B cell (primary cell): ENCODE measurements at regions of chr22 and their contacts with region 1.

Region 1: GRCh38 chr22:23786752-23787599 is at the start of gene SMARCB1:
- DNase-seq: peak; percentile 94
- ATAC-seq: peak; percentile 85
- H3K4me3 ChIP-seq: peak within 1 kb of the TSS; percentile 72 to 95 (median 84)
- H3K4me3 Mint-ChIP-seq: peak within 1 kb of the TSS; percentile 95
- H3K27ac ChIP-seq: peak within 1 kb of the TSS; percentile 94 to 98
- H3K27ac Mint-ChIP-seq: peak within 1 kb of the TSS; percentile 91
- H3K4me1 ChIP-seq: peaks cover 48 to 58% of the 10 kb centered on the region in 2 donors
- H3K4me1 Mint-ChIP-seq: peaks cover 39% of the 10 kb centered on the region
- H3K27me3 ChIP-seq: no peaks in the 10 kb centered on the region
- H3K27me3 Mint-ChIP-seq: no peaks in the 10 kb centered on the region
- CTCF ChIP-seq: no peak
- total RNA-seq, gene SMARCB1: 179 and 187 TPM in 2 replicates

Region 2: DNA sequence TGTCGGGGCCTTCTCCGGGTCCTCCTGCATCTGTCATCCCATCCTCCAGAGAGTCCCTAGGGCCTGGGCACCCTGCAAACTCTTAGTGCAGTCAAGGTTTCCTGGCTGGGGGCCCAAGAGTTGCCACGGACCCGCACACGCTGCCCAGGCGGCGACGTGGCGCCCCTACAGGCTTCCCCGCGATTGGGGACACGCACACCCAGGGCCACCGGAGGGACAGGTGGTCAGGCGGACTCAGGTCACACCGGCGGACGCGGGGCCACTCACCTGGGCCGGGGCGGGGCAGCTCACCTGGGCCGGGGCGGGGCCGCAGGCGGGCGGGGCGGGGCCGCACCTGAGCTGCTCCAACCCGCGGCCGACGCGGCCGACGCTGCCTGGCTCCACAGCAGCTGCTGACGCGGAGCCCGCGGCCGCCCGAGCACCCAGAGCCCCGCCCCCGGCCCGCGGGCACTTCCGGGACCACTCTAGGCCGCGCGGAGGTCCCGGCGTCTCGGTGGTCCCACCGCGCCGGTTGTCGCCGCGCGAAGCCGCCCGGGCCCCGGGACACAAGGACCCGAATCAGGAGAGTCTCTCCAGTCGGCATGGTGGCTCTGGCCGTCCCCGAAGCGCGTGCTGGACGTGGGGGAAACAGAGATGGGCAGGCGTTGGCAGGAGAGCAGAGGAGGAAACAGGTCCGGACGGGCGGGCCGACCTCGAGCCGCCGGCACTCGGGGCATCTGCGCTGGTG is 36.1 kb before region 1 on chr22 and contains the start of gene ZNF70:
- CTCF ChIA-PET with region 1: no interaction called
- POLR2A ChIA-PET with region 1: interaction called, 29 read pairs
- intact Hi-C with region 1: loop called (anchors 1 kb)
- DNase-seq: peak; percentile 92
- ATAC-seq: peak; percentile 56
- H3K4me3 ChIP-seq: peak within 1 kb of the TSS; percentile 6 to 88 (median 83)
- H3K4me3 Mint-ChIP-seq: peak within 1 kb of the TSS; percentile 93
- H3K27ac ChIP-seq: peak within 1 kb of the TSS; percentile 85 to 98
- H3K27ac Mint-ChIP-seq: peak within 1 kb of the TSS; percentile 99
- H3K4me1 ChIP-seq: peaks cover 24 to 53% of the 10 kb centered on the region in 2 donors
- H3K4me1 Mint-ChIP-seq: peaks cover 55% of the 10 kb centered on the region
- H3K27me3 ChIP-seq: no peaks in the 10 kb centered on the region
- H3K27me3 Mint-ChIP-seq: no peaks in the 10 kb centered on the region
- CTCF ChIP-seq: no peak
- total RNA-seq, gene ZNF70: 8.3 and 9.6 TPM in 2 replicates

Region 3: DNA sequence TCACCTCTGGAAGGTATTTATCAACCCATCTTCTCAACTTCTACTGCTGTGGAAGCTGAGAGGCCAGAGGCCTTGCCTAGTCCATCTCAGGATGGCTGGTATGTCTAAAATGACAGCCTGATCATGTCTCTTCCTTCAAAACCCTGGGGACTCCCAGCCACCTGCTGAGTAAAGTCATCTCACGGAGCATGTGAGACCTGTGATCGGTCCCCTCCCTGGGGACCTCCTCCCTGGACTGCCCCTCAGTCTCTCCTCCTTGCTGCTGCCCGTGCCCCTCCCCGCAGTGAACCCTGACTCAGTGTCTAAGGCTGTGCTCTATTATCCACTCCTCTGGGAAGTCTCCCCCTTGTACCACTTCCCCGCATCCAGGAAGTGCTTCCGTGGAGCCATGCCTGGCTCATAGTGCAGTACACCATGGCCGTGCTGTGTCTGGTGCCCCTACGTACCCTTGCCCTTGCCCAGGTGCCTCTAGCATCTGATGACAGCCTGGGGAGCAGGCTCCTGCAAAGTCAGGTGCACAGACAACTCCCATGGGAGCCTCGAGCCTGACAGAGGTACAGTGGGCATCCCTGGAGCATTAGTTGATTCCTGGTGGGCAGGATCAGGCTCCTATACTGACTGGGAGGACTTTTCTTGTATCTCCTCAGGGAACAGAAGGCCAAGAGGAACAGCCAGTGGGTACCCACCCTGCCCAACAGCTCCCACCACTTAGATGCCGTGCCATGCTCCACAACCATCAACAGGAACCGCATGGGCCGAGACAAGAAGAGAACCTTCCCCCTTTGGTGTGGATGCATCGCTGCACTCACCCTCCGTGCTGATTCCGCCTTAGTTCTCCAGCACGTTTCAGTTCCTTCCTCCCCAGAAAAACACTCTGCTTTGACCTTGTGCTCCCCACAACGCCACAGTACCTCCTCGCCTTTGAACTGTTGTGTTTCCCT is 13.6 kb after region 1 on chr22:
- CTCF ChIA-PET with region 1: no interaction called
- POLR2A ChIA-PET with region 1: interaction called, 11 read pairs
- intact Hi-C with region 1: loop called (anchors 1 kb)
- DNase-seq: peak; percentile 89
- ATAC-seq: peak; percentile 70
- H3K4me3 ChIP-seq: peak overlapping the region in 4 of 5 experiments; percentile 0 to 44 (median 4)
- H3K4me3 Mint-ChIP-seq: peak overlapping the region; percentile 81
- H3K27ac ChIP-seq: peak overlapping the region; percentile 92 to 93
- H3K27ac Mint-ChIP-seq: peak overlapping the region; percentile 96
- H3K4me1 ChIP-seq: peaks cover 63 to 76% of the 10 kb centered on the region in 2 donors
- H3K4me1 Mint-ChIP-seq: peaks cover 70% of the 10 kb centered on the region
- H3K27me3 ChIP-seq: no peaks in the 10 kb centered on the region
- H3K27me3 Mint-ChIP-seq: no peaks in the 10 kb centered on the region
- CTCF ChIP-seq: no peak

Region 4: DNA sequence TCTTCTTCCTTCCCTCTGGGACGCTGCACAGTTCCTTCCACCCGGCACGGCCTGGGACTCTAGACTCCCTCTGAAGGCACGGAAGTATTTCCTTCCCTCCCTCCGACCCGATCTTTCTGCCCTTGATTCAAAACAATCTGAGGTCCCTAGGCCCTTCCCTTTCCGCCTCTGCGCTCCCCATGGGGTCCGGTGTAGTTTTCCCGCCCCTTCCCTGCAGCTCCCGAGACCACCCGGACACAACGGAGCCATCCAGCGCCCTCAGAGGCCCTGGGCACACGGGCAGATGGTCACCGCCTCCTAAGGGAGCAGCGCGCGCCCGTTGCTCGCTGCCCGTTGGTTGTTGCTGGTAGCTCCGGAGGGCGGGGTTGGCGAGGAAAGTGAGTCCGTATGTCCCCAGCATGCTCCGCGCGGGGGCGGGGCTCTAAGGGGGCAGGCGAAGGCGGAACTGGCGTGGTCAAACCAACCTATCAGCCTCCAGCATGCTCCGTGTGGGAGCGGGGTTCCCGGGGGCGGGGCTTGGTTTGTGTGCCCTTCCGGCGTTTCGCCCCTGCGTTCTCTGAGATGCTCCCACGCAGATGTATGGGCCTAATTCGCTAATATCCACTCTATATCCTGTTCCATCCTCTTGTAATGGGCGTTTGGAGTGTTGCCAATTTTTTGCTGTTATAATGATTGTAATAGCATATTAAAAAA is 126.8 kb after region 1 on chr22:
- CTCF ChIA-PET with region 1: no interaction called
- POLR2A ChIA-PET with region 1: interaction called, 6 read pairs
- intact Hi-C with region 1: loop called (anchors 5 kb)
- DNase-seq: peak; percentile 98
- ATAC-seq: peak; percentile 99
- H3K4me3 ChIP-seq: peak overlapping the region; percentile 52 to 96 (median 68)
- H3K4me3 Mint-ChIP-seq: peak overlapping the region; percentile 98
- H3K27ac ChIP-seq: peak overlapping the region; percentile 68 to 92
- H3K27ac Mint-ChIP-seq: peak overlapping the region; percentile 98
- H3K4me1 ChIP-seq: peaks cover 21 to 24% of the 10 kb centered on the region in 2 donors
- H3K4me1 Mint-ChIP-seq: peaks cover 31% of the 10 kb centered on the region
- H3K27me3 ChIP-seq: no peaks in the 10 kb centered on the region
- H3K27me3 Mint-ChIP-seq: no peaks in the 10 kb centered on the region
- CTCF ChIP-seq: no peak

Region 5: GRCh38 chr22:24894220-24894975 is 1107.4 kb after region 1 on chr22:
- CTCF ChIA-PET with region 1: no interaction called
- POLR2A ChIA-PET with region 1: no interaction called
- intact Hi-C with region 1: no loop called
- DNase-seq: no peak
- ATAC-seq: no peak
- H3K4me3 ChIP-seq: no peak overlapping the region
- H3K4me3 Mint-ChIP-seq: no peak overlapping the region
- H3K27ac ChIP-seq: no peak overlapping the region
- H3K27ac Mint-ChIP-seq: no peak overlapping the region
- H3K4me1 ChIP-seq: no peaks in the 10 kb centered on the region
- H3K4me1 Mint-ChIP-seq: no peaks in the 10 kb centered on the region
- H3K27me3 ChIP-seq: peaks cover 0 to 4% (median 1%) of the 10 kb centered on the region in 4 experiments
- H3K27me3 Mint-ChIP-seq: peaks cover 16% of the 10 kb centered on the region
- CTCF ChIP-seq: no peak